A549 (cell line): ENCODE measurements at regions of chr2 and their contacts with region 1.

Region 1: GRCh38 chr2:9843229-9844035 is at the start of gene TAF1B:
- DNase-seq: peak; percentile 95 to 96
- ATAC-seq: peak; percentile 96 to 97
- H3K4me3 ChIP-seq: peak within 1 kb of the TSS; percentile 73
- H3K27ac ChIP-seq: peak within 1 kb of the TSS; percentile 95
- H3K4me1 ChIP-seq: peaks cover 18% of the 10 kb centered on the region; the same call in 2 of the 3 replicates
- CTCF ChIP-seq: no peak
- EP300 ChIP-seq: no peak
- POLR2A ChIP-seq: peak; percentile 76
- RAD21 ChIP-seq: no peak
- polyA plus RNA-seq, gene TAF1B: 40.8 and 51.7 TPM in 2 replicates

Region 2: DNA sequence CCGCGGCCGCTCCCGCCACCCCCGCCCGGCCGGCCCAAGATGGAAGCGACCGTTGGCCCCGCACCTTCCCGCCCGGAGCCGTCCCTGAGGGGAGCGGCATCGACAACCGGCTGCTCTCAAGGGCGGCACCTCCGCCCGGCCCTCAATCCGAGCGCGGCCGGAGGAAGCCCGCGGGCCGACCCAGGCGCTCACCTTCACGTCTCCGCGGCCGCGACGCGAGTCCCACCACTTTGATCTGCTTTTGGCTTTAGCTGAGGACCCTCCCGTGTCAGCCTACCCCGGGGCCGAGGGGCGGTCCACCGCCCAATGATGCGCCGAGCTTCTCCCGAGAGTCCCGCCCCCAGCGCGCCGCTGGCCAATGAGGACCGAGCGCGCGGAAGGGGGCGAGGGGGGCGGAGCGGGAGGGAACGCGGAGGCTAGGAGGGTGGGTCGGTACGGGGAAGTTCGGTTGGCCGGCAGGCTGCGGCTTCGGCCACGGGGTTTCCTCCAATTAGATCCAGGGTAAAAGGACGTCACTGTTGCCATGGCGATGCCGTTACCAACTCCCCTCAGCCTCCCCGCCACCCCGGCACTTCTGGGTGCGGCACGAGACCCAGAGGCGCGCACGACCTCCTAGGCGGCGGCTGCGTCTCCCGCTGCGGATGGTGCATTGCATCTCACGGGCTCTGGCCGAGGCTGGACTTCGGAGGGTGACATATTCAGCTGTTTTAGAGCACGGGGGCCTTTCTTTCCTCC is 212.5 kb before region 1 on chr2 and contains the start of gene YWHAQ:
- CTCF ChIA-PET with region 1: no interaction called
- POLR2A ChIA-PET with region 1: no interaction called
- DNase-seq: peak; percentile 99
- ATAC-seq: peak; percentile 88 to 94
- H3K4me3 ChIP-seq: peak within 1 kb of the TSS; percentile 93
- H3K27ac ChIP-seq: peak within 1 kb of the TSS; percentile 96 to 97
- H3K4me1 ChIP-seq: peaks cover 40% of the 10 kb centered on the region
- CTCF ChIP-seq: no peak
- EP300 ChIP-seq: no peak
- POLR2A ChIP-seq: peak; percentile 98
- RAD21 ChIP-seq: peak; percentile 22 to 40; a peak in 3 of 5 replicates
- polyA plus RNA-seq, gene YWHAQ: 672 and 833 TPM in 2 replicates

Region 3: GRCh38 chr2:9763356-9764152 is 79.9 kb before region 1 on chr2:
- CTCF ChIA-PET with region 1: no interaction called
- POLR2A ChIA-PET with region 1: no interaction called
- DNase-seq: no peak
- ATAC-seq: peak; percentile 3 to 17; a peak in 1 of 6 replicates
- H3K4me3 ChIP-seq: no peak overlapping the region
- H3K27ac ChIP-seq: peak overlapping the region; percentile 9 to 48; a peak in 4 of 6 replicates
- H3K4me1 ChIP-seq: peaks cover 26% of the 10 kb centered on the region
- CTCF ChIP-seq: no peak
- EP300 ChIP-seq: no peak
- POLR2A ChIP-seq: no peak
- RAD21 ChIP-seq: no peak

Region 4: DNA sequence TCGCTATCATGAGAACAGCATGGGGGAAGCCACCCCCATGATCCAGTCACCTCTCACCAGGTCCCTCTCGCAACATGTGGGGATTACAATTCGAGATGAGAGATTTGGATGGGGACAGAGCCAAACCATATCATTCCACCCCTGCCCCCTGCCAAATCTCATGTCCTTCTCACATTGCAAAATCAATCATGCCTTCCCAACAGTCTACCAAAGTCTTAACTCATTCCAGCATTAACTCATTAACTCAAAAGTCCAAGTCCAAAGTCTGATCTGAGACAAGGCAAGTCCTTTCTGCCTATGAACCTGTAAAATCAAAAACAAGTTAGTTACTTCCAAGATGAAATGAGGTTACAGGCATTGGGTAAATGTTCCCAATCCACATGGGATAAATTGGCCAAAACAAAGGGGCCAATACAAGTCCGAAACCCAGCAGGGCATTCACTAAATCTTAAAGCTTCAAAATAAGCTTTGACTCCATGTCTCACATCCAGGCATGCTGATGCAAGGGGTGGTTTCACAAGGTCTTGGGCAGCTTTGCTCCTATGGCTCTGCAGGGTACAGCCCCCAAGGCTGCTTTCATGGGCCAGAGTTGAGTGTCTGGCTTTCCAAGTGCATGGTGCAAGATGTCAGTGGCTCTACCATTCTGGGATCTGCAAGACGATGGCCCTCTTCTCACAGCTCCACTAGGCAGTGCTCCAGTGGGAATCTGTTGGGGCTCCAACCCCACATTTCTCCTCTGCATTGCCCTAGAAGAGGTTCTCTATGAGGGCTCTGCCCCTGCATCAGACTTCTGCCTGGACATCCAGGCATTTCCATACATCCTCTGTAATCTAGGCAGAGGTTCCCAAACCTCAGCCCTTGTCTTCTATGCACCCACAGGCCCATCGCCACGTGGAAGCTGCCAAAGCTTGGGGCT is 14.6 kb after region 1 on chr2:
- CTCF ChIA-PET with region 1: interaction called, 4 read pairs
- POLR2A ChIA-PET with region 1: interaction called, 10 read pairs
- DNase-seq: peak in 1 of 2 experiments; percentile 18
- ATAC-seq: no peak
- H3K4me3 ChIP-seq: no peak overlapping the region
- H3K27ac ChIP-seq: no peak overlapping the region
- H3K4me1 ChIP-seq: no peaks in the 10 kb centered on the region
- CTCF ChIP-seq: no peak
- EP300 ChIP-seq: no peak
- POLR2A ChIP-seq: no peak
- RAD21 ChIP-seq: no peak

Region 5: GRCh38 chr2:9897331-9897737 is 53.9 kb after region 1 on chr2:
- CTCF ChIA-PET with region 1: interaction called, 3 read pairs
- POLR2A ChIA-PET with region 1: interaction called, 11 read pairs
- DNase-seq: peak; percentile 11 to 46
- ATAC-seq: peak; percentile 75 to 84; a peak in 5 of 6 replicates
- H3K4me3 ChIP-seq: no peak overlapping the region
- H3K27ac ChIP-seq: no peak overlapping the region
- H3K4me1 ChIP-seq: peaks cover 18% of the 10 kb centered on the region
- CTCF ChIP-seq: no peak
- EP300 ChIP-seq: no peak
- POLR2A ChIP-seq: no peak
- RAD21 ChIP-seq: no peak